Esophagus muscularis mucosa (tissue), 4 donors: ENCODE measurements at regions of chr2 and their contacts with region 1.

Region 1: DNA sequence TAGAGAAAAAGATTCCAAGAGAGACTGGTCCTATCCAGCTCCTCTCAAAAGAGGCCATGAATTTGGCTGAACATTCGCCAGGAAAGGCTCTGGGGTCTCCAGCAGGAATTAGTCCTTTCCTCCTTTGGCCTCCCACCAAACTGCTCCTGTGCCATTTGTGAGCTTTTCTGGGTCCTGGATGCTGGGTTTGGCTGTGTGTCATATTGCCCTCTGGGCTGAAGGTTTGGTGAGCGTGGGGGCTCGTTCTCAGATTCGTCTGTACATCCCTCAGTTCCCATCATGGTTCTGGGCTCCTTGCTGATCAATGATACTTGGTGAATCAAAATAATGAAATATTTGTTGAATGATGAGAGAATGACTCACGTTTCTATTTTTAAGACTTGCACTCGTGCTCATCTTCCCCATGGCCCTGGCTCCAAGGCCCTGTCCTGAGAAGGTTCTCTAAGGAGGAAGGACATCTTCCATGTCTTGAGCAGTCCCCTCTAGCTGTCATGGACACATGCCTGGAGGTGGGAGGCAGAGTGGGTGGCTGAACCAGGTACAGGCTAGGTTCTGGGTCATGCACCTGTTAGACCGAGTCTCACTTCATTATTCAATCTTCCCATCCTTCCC is 47.8 kb upstream of the RHOB start:
- DNase-seq: no peak
- H3K4me3 ChIP-seq: no peak overlapping the region
- H3K27ac ChIP-seq: peak overlapping the region in 1 of 4 donors; percentile 21
- H3K4me1 ChIP-seq: peaks cover 0 to 41% (median 41%) of the 10 kb centered on the region in 4 donors
- H3K27me3 ChIP-seq: no peaks in the 10 kb centered on the region
- CTCF ChIP-seq: no peak
- EP300 ChIP-seq: no peak
- POLR2A ChIP-seq: no peak

Region 2: GRCh38 chr2:20446917-20447436 is 47.9 kb after region 1 on chr2 and contains the start of gene RHOB:
- intact Hi-C with region 1: no loop called
- DNase-seq: peak; percentile 100
- H3K4me3 ChIP-seq: peak within 1 kb of the TSS; percentile 73 to 99 (median 78)
- H3K27ac ChIP-seq: peak within 1 kb of the TSS; percentile 94 to 100 (median 98)
- H3K4me1 ChIP-seq: peaks cover 25 to 55% (median 51%) of the 10 kb centered on the region in 4 donors
- H3K27me3 ChIP-seq: no peaks in the 10 kb centered on the region
- CTCF ChIP-seq: no peak
- EP300 ChIP-seq: no peak
- POLR2A ChIP-seq: peak; percentile 100
- total RNA-seq, gene RHOB: 809 to 1,532 (median 1,203) TPM

Region 3: GRCh38 chr2:20642055-20642971 is 243.3 kb after region 1 on chr2:
- intact Hi-C with region 1: loop called (anchors 5 kb)
- DNase-seq: peak; percentile 95
- H3K4me3 ChIP-seq: peak overlapping the region in 1 of 4 donors; percentile 4
- H3K27ac ChIP-seq: peak overlapping the region; percentile 90 to 98 (median 94)
- H3K4me1 ChIP-seq: peaks cover 36 to 74% (median 69%) of the 10 kb centered on the region in 4 donors
- H3K27me3 ChIP-seq: no peaks in the 10 kb centered on the region
- CTCF ChIP-seq: peak; percentile 93 to 99 (median 96)
- EP300 ChIP-seq: no peak
- POLR2A ChIP-seq: no peak